ENCODE measurements at regions of chr16 and their contacts with region 1.

Region 1: GRCh38 chr16:86343027-86343787 is 167.1 kb upstream of the FOXF1 start:
- DNase-seq: no peak
- H3K4me3 ChIP-seq: no peak overlapping the region
- H3K27ac ChIP-seq: peak overlapping the region in 1 of 2 donors; percentile 75
- H3K4me1 ChIP-seq: no peaks in the 10 kb centered on the region
- H3K27me3 ChIP-seq: peaks cover 0 to 70% of the 10 kb centered on the region in 2 donors
- CTCF ChIP-seq: no peak
- POLR2A ChIP-seq: no peak

Region 2: DNA sequence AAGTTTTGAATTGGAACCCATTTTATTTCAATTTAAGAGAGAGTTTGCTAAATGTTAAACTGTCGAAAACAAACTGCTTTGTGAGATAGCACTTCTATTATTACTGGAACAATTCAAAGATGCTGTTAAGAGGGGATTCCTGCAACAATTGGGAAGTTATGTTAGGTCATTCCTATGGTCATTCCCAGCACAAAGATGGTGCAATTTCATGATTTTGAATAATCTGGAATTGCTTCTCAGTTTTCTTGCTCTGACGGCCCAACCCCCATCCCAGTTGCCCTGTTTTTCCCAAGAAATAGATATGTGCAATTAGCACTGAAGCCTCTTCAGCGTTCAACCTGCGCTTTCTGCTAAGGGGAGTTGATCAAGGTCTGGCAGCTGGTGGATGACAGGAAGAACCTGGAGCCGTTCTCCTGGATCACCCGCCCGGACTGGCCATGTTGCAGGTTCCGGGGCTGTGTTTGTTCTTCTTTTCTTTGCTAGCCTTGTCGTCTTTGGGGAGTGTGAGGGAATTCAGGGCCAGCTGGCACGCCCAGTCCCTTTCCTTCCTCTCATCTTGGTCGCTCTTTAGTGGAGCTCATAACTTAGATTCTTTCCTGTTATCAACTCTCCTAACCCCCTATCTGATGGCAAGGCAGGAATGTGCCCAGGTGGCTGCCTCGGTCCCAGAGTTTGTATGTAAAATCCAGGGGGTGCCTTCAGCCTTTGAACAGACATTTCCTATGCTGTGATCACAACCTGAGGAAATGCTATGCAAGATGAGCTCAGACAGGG is 473.2 kb before region 1 on chr16:
- intact Hi-C with region 1: no loop called
- DNase-seq: no peak
- H3K4me3 ChIP-seq: no peak overlapping the region
- H3K27ac ChIP-seq: no peak overlapping the region
- H3K4me1 ChIP-seq: no peaks in the 10 kb centered on the region
- H3K27me3 ChIP-seq: peaks cover 0 to 12% of the 10 kb centered on the region in 2 donors
- CTCF ChIP-seq: no peak
- POLR2A ChIP-seq: no peak

Region 3: GRCh38 chr16:86330906-86331305 is 12.3 kb before region 1 on chr16:
- intact Hi-C with region 1: no loop called
- DNase-seq: no peak
- H3K4me3 ChIP-seq: no peak overlapping the region
- H3K27ac ChIP-seq: no peak overlapping the region
- H3K4me1 ChIP-seq: no peaks in the 10 kb centered on the region
- H3K27me3 ChIP-seq: peaks cover 0 to 75% of the 10 kb centered on the region in 2 donors
- CTCF ChIP-seq: no peak
- POLR2A ChIP-seq: no peak

Region 4: GRCh38 chr16:86396897-86397296 is 53.7 kb after region 1 on chr16:
- intact Hi-C with region 1: no loop called
- DNase-seq: no peak
- H3K4me3 ChIP-seq: peak overlapping the region in 1 of 3 donors; percentile 15
- H3K27ac ChIP-seq: no peak overlapping the region
- H3K4me1 ChIP-seq: no peaks in the 10 kb centered on the region
- H3K27me3 ChIP-seq: peaks cover 0 to 34% of the 10 kb centered on the region in 2 donors
- CTCF ChIP-seq: no peak
- POLR2A ChIP-seq: no peak

Region 5: DNA sequence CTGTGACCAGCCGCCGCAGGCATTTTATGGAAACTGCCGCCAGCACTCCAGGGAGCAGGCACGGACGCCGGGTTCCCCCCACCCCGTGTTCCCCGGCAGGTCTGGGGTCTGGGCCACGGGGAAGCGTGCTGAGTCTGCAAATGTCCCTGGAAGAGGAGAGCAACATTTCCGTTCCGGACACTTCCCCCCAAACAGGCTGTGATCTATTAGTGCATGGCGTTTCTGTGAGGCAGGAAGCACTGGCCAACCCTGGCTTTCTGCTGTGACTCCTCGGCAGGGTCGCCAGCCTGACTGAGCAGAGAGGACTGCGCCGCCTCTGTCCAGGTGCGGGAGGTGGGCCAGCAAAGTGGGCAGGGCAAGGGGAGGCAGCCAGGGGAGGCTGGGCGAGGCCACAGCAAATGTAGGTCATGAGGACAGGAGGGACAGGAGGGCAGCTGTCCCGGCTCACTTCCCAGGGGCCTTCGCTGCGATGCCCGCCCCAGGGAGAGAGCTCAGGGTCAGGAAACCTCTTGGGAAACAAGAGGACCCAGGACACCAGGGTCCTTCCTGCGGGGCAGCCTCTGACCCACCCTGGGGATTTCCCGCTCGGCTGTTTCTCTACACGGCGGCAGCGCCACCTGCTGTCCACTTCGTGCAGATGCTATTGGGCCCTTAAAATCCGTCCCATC is 176.6 kb after region 1 on chr16:
- intact Hi-C with region 1: loop called (anchors 5 kb)
- DNase-seq: no peak
- H3K4me3 ChIP-seq: peak overlapping the region in 1 of 3 donors; percentile 46
- H3K27ac ChIP-seq: no peak overlapping the region
- H3K4me1 ChIP-seq: no peaks in the 10 kb centered on the region
- H3K27me3 ChIP-seq: peaks cover 8 to 78% of the 10 kb centered on the region in 2 donors
- CTCF ChIP-seq: peak in 2 of 3 donors; percentile 72
- POLR2A ChIP-seq: no peak

Measured in breast epithelium (tissue), 4 donors.